ENCODE measurements at regions of chr22 and their contacts with region 1.

Region 1: GRCh38 chr22:44597616-44598015 is 99.6 kb upstream of the RTL6 start:
- DNase-seq: peak in 1 of 2 donors; percentile 19
- ATAC-seq: no peak
- H3K4me3 ChIP-seq: no peak overlapping the region
- H3K27ac ChIP-seq: no peak overlapping the region
- H3K4me1 ChIP-seq: no peaks in the 10 kb centered on the region
- H3K27me3 ChIP-seq: peaks cover 8 to 25% (median 15%) of the 10 kb centered on the region in 3 donors
- CTCF ChIP-seq: no peak
- POLR2A ChIP-seq: no peak

Region 2: GRCh38 chr22:44572414-44573207 is 25.0 kb before region 1 on chr22:
- in situ Hi-C with region 1: no loop called
- intact Hi-C with region 1: loop called (anchors 1 kb)
- DNase-seq: no peak
- ATAC-seq: no peak
- H3K4me3 ChIP-seq: no peak overlapping the region
- H3K27ac ChIP-seq: no peak overlapping the region
- H3K4me1 ChIP-seq: no peaks in the 10 kb centered on the region
- H3K27me3 ChIP-seq: peaks cover 6 to 12% (median 7%) of the 10 kb centered on the region in 3 donors
- CTCF ChIP-seq: no peak
- POLR2A ChIP-seq: no peak